Activated naive CD4-positive, alpha-beta T cell treated with anti-CD3 and anti-CD28 coated beads for 36 hours (primary cell): ENCODE measurements at regions of chr14 and their contacts with region 1.

Region 1: GRCh38 chr14:45426670-45427282 is 173.8 kb upstream of the MIS18BP1 start:
- DNase-seq: no peak
- H3K4me3 Mint-ChIP-seq: no peak overlapping the region
- H3K27ac Mint-ChIP-seq: no peak overlapping the region
- H3K4me1 Mint-ChIP-seq: no peaks in the 10 kb centered on the region
- H3K27me3 Mint-ChIP-seq: no peaks in the 10 kb centered on the region

Region 2: DNA sequence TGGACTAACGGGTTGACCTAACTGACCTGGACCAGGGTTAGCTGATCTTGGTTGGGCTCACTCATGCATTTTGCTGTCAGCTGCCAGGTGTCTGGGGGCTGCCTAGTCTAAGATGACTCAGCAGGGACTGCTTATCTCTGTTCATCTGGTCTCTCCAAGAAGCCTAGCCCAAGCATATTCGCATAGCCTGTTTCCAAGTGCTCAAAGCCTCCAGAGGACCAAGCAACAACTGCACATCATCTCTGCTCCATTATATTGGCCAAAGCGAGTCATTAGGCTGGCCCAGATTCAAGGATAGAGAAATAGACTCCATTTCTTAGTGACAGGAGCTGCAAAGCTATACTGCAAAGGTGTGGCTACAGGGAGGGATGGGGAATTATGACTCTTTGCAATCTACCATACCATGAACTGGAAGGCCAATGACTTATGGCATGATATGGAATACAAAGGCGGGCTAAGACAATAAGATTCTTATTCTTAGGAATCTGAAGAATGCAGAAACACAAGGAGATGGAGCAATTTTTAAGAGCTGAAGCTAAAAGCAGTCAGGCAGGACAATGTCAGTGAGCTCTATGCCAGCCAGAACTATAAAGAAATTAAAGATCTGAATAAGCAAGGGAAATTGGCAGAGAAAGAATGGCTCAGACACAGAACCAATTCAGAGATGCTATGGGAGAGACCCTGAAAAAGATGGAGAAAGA is 725.1 kb before region 1 on chr14:
- CTCF ChIA-PET with region 1: no interaction called
- intact Hi-C with region 1: no loop called
- DNase-seq: no peak
- H3K4me3 Mint-ChIP-seq: no peak overlapping the region
- H3K27ac Mint-ChIP-seq: no peak overlapping the region
- H3K4me1 Mint-ChIP-seq: no peaks in the 10 kb centered on the region
- H3K27me3 Mint-ChIP-seq: no peaks in the 10 kb centered on the region

Region 3: DNA sequence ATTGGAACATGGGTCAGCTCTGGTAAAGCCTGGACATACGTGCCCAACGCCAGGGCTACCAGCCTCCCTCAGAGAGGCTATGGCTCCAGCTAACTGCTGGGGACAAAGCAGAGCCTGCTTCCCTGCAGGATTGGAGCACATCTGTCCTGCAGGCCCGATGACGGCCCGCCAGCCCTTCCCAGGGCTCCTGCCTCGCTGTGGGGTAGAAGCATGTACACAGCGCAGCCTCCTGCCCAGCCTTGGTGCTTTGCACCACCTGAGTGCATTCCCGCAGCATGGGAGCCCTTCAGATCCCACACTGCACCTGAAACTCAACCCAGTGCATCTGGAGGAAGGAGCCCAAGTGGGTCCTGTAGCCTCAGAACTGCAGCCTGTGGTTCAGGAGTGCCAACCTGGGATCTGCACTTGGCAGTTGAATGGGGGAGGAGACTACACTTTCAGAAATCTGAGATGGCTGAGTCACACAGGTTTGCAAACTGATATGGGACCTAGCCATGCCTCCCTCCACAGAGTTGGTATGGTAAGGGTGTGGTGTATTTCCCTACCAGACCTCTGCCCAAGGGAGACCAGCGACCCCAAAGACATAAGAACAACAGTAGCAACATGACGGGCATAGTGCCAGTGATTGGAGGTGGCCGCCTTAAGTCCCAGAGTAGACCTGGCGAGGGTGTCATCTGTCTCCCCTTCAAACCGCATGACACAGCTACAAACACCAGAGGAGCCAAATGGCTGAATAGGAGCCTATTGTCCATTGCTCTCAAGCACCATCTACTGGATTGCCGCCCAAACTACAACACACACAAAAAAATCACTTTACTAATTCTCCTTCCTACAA is 100.2 kb after region 1 on chr14:
- CTCF ChIA-PET with region 1: no interaction called
- intact Hi-C with region 1: loop called (anchors 1 kb)
- DNase-seq: peak; percentile 12
- H3K4me3 Mint-ChIP-seq: no peak overlapping the region
- H3K27ac Mint-ChIP-seq: no peak overlapping the region
- H3K4me1 Mint-ChIP-seq: no peaks in the 10 kb centered on the region
- H3K27me3 Mint-ChIP-seq: no peaks in the 10 kb centered on the region

Region 4: GRCh38 chr14:46344327-46344937 is 917.7 kb after region 1 on chr14:
- CTCF ChIA-PET with region 1: no interaction called
- intact Hi-C with region 1: loop called (anchors 5 kb)
- DNase-seq: no peak
- H3K4me3 Mint-ChIP-seq: no peak overlapping the region
- H3K27ac Mint-ChIP-seq: no peak overlapping the region
- H3K4me1 Mint-ChIP-seq: no peaks in the 10 kb centered on the region
- H3K27me3 Mint-ChIP-seq: no peaks in the 10 kb centered on the region